ENCODE measurements at regions of chr2 and their contacts with region 1.

Region 1: GRCh38 chr2:187581125-187581896 is 27.1 kb upstream of the TFPI start:
- DNase-seq: no peak
- H3K4me3 ChIP-seq: no peak overlapping the region; the same call in 1 of the 2 replicates
- H3K27ac ChIP-seq: no peak overlapping the region
- H3K27me3 ChIP-seq: no peaks in the 10 kb centered on the region
- CTCF ChIP-seq: peak; percentile 70

Region 2: GRCh38 chr2:187493877-187494568 is 87.3 kb before region 1 on chr2:
- CTCF ChIA-PET with region 1: interaction called, 792 read pairs
- POLR2A ChIA-PET with region 1: no interaction called
- DNase-seq: no peak
- H3K4me3 ChIP-seq: no peak overlapping the region
- H3K27ac ChIP-seq: no peak overlapping the region
- H3K27me3 ChIP-seq: no peaks in the 10 kb centered on the region
- CTCF ChIP-seq: no peak

Region 3: GRCh38 chr2:187527262-187527661 is 54.0 kb before region 1 on chr2:
- CTCF ChIA-PET with region 1: interaction called, 14 read pairs
- POLR2A ChIA-PET with region 1: no interaction called
- DNase-seq: peak; percentile 13
- H3K4me3 ChIP-seq: no peak overlapping the region
- H3K27ac ChIP-seq: no peak overlapping the region
- H3K27me3 ChIP-seq: no peaks in the 10 kb centered on the region
- CTCF ChIP-seq: no peak

Region 4: GRCh38 chr2:187547353-187547979 is 33.8 kb before region 1 on chr2:
- CTCF ChIA-PET with region 1: interaction called, 68 read pairs
- POLR2A ChIA-PET with region 1: no interaction called
- DNase-seq: peak; percentile 81
- H3K4me3 ChIP-seq: no peak overlapping the region
- H3K27ac ChIP-seq: no peak overlapping the region
- H3K27me3 ChIP-seq: no peaks in the 10 kb centered on the region
- CTCF ChIP-seq: no peak

Region 5: GRCh38 chr2:187567126-187567525 is 14.2 kb before region 1 on chr2:
- CTCF ChIA-PET with region 1: interaction called, 47 read pairs
- POLR2A ChIA-PET with region 1: no interaction called
- DNase-seq: peak; percentile 33
- H3K4me3 ChIP-seq: no peak overlapping the region
- H3K27ac ChIP-seq: no peak overlapping the region
- H3K27me3 ChIP-seq: no peaks in the 10 kb centered on the region
- CTCF ChIP-seq: no peak

Region 6: GRCh38 chr2:187842978-187843847 is 261.9 kb after region 1 on chr2:
- CTCF ChIA-PET with region 1: interaction called, 150 read pairs
- POLR2A ChIA-PET with region 1: no interaction called
- DNase-seq: peak; percentile 55
- H3K4me3 ChIP-seq: no peak overlapping the region
- H3K27ac ChIP-seq: no peak overlapping the region
- H3K27me3 ChIP-seq: no peaks in the 10 kb centered on the region
- CTCF ChIP-seq: peak; percentile 63

Region 7: DNA sequence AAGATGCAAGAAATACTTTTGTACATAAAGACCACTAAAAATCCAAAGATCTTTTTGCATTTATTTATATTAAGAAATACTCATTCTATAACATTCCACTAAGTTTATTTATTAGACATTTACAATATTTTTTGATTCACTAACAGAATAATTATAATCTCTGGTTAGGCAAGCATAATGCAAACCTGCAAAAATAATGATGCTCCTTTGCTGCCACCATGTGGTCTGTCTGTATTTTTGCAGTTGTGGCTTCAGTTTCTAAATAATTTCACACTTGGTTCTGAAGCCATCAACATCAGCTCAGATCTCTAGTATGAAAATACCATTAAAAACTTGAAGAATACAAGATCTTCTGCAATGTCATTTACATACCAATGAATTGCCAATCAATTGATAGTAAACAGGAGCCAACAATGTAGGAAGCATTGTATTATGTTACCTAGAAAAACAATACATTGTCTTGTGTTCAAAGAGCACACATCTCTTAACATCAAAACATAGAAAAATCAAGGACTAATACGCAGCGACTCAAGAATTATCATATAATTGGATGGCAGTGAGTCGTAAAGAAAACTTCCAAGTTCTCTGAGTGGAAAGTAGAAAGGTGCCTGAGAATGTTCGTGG is 1831.1 kb after region 1 on chr2:
- CTCF ChIA-PET with region 1: interaction called, 17 read pairs
- POLR2A ChIA-PET with region 1: no interaction called
- DNase-seq: peak; percentile 48
- H3K4me3 ChIP-seq: peak overlapping the region; percentile 23; the same call in 1 of the 2 replicates
- H3K27ac ChIP-seq: no peak overlapping the region
- H3K27me3 ChIP-seq: no peaks in the 10 kb centered on the region
- CTCF ChIP-seq: peak; percentile 67

Measured in AG04450 (cell line).